ENCODE measurements at regions of chr3 and their contacts with region 1.

Region 1: GRCh38 chr3:25962249-25962648 is 172.4 kb downstream of the OXSM start:
- DNase-seq: peak; percentile 35
- H3K4me3 Mint-ChIP-seq: no peak overlapping the region
- H3K27ac Mint-ChIP-seq: no peak overlapping the region
- H3K4me1 Mint-ChIP-seq: no peaks in the 10 kb centered on the region
- H3K27me3 Mint-ChIP-seq: no peaks in the 10 kb centered on the region
- CTCF ChIP-seq: peak; percentile 34

Region 2: DNA sequence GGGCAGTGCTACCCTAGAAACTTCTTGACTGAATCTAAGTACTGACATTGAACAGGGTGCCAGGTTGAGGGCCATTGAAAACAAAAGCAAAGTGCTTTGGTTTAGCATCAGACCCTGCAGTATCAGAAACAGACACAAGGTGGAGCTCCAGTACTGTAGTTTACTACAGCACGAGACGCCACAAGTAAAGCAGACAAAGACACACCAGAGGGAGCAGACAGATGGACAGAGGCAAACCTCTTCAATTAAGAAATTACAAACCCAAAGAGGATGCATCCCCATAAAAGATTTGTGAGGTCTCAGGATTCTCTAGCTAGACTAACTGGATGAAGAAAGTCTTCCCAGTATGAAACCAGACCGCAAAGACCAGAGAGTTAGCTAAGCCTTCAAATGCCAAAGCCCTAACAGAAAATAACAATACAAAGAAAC is 314.1 kb before region 1 on chr3:
- CTCF ChIA-PET with region 1: interaction called, 5 read pairs
- intact Hi-C with region 1: loop called (anchors 5 kb)
- DNase-seq: peak; percentile 80
- H3K4me3 Mint-ChIP-seq: no peak overlapping the region
- H3K27ac Mint-ChIP-seq: no peak overlapping the region
- H3K4me1 Mint-ChIP-seq: peaks cover 26% of the 10 kb centered on the region
- H3K27me3 Mint-ChIP-seq: no peaks in the 10 kb centered on the region
- CTCF ChIP-seq: peak; percentile 70

Region 3: DNA sequence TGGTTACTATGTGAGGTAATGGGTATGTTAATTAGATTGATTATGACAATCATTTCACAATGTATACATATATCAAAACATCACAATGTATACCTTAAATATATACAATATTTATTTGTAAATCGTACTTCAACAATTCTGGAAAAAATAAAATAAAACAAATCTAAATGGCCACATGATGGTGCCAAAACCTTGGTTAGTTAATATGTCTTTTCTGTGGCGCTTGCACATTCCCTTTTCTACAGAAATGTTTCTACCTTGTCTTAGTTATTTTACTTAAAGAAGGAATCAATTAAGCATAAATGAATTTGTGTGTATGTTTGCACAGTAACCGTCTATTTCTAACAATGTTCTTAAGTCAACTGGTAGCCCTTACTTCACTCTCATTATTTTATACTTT is 118.9 kb before region 1 on chr3:
- CTCF ChIA-PET with region 1: no interaction called
- intact Hi-C with region 1: loop called (anchors 1 kb)
- DNase-seq: no peak
- H3K4me3 Mint-ChIP-seq: no peak overlapping the region
- H3K27ac Mint-ChIP-seq: no peak overlapping the region
- H3K4me1 Mint-ChIP-seq: no peaks in the 10 kb centered on the region
- H3K27me3 Mint-ChIP-seq: no peaks in the 10 kb centered on the region
- CTCF ChIP-seq: no peak

Region 4: DNA sequence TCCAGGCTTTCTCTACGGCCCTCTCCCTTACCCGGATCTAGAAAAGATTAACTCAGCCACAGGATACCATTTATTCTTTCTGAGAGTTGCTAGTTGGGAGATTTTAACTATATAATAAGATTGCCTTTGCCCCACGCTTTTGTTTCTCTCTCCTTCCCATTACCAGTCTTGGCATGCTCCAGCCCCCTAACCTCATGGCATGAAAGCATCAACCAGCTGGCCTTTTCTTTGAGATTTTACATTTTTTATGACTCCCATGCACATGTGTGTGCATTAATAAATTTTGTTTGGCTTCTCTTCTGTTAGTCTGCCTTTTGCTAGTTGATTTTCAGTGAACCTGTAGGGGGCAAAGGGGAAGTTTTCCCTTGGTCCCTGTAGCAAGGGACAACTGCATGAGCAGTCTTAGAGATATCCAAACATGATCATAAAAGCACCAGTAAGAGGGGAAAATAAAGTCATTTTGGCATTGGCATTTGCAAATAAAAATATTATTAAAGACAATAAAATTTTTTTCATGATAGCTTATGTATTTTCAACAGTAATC is 98.8 kb before region 1 on chr3:
- CTCF ChIA-PET with region 1: no interaction called
- intact Hi-C with region 1: loop called (anchors 5 kb)
- DNase-seq: no peak
- H3K4me3 Mint-ChIP-seq: no peak overlapping the region
- H3K27ac Mint-ChIP-seq: no peak overlapping the region
- H3K4me1 Mint-ChIP-seq: no peaks in the 10 kb centered on the region
- H3K27me3 Mint-ChIP-seq: no peaks in the 10 kb centered on the region
- CTCF ChIP-seq: no peak

Region 5: GRCh38 chr3:25904206-25904605 is 58.0 kb before region 1 on chr3:
- CTCF ChIA-PET with region 1: interaction called, 4 read pairs
- intact Hi-C with region 1: loop called (anchors 1 kb)
- DNase-seq: peak; percentile 6
- H3K4me3 Mint-ChIP-seq: no peak overlapping the region
- H3K27ac Mint-ChIP-seq: no peak overlapping the region
- H3K4me1 Mint-ChIP-seq: no peaks in the 10 kb centered on the region
- H3K27me3 Mint-ChIP-seq: no peaks in the 10 kb centered on the region
- CTCF ChIP-seq: no peak